Tibial artery (tissue), 4 donors: ENCODE measurements at regions of chrX and their contacts with region 1.

Region 1: GRCh38 chrX:9708904-9709553 is 56.6 kb downstream of the GPR143 start:
- DNase-seq: peak; percentile 45 to 80
- H3K4me3 ChIP-seq: no peak overlapping the region
- H3K27ac ChIP-seq: no peak overlapping the region
- H3K4me1 ChIP-seq: peaks cover 0 to 12% (median 0%) of the 10 kb centered on the region in 4 donors
- H3K27me3 ChIP-seq: no peaks in the 10 kb centered on the region
- CTCF ChIP-seq: peak; percentile 73 to 75

Region 2: DNA sequence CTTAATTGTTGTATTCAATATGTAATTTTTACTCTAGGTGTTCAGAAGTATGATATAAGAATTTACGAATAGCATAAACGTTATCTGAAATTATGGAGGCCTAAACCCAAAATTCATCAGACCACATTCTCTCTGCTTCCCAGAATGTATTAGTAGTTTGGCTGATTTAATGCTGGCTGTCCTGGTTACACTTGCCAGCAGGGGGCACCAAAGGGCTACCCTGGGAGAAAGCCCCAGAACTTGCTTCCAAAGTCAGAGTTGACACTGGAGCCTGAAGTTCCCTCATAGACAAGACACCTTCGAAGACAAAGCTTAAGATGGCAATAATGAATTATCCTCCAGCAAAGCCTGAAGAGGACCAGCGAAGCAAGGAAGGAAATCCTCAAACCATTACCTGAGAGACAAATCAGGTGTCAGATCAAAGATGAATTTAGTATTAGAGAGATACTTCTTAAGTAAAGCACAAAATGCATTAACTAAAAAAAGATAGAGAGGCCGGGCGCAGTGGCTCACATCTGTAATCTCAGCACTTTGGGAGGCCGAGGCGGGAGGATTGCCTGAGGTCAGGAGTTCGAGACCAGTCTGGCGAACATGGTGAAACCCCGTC is 965.8 kb before region 1 on chrX:
- intact Hi-C with region 1: loop called (anchors 10 kb)
- DNase-seq: peak in 1 of 2 donors; percentile 42
- H3K4me3 ChIP-seq: no peak overlapping the region
- H3K27ac ChIP-seq: no peak overlapping the region
- H3K4me1 ChIP-seq: no peaks in the 10 kb centered on the region
- H3K27me3 ChIP-seq: no peaks in the 10 kb centered on the region
- CTCF ChIP-seq: peak in 1 of 2 experiments; percentile 42

Region 3: DNA sequence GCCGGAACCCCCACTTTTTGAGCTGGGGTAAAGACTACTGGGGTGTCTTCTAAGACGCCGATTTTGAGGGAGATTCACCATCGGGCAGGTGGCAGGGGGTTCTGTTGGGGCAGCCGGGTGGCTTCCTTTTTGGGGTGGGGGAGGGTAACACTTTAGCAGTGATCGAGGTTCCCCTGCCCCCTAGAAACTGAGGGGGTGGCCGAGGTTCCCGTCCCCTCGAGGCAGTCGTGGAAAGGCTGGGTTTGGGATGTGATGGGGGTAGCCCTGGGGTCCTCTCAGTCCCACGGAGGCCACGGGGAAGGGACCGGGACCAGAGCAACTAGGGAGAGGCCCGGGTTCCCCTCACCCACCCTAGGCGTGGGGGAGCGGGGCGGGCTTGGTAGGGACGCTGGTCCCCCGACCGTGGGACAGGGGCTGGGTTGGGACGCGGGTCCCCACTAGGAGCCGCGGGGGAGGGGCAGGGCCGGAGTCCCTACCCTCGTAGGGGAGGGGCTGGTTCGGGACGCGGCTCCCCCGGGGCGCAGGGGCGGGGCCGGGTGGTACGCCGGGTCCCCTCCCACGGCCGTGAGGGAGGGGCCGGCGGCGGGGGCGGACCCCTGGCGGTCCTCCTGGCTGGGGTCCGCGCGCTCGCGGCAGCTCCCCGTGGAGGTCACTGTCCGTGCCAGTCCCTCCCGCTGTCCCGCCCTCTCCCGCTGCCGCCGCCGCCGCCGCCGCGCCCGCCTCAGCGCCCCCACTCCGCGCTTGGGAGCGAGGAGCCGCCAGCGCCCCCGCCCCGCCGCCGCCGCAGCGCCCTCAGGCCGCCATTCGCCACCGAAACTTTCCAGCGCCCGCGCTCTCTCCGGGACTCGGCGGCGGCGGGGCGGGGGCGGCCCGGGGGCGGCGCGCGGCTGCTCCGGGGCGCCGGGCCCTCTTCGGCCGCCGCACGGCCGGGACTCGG is 244.3 kb before region 1 on chrX and contains the start of gene TBL1X:
- intact Hi-C with region 1: loop called (anchors 10 kb)
- DNase-seq: peak; percentile 22 to 71
- H3K4me3 ChIP-seq: peak within 1 kb of the TSS; percentile 77 to 83
- H3K27ac ChIP-seq: peak within 1 kb of the TSS; percentile 90 to 93
- H3K4me1 ChIP-seq: peaks cover 0 to 40% (median 16%) of the 10 kb centered on the region in 4 donors
- H3K27me3 ChIP-seq: no peaks in the 10 kb centered on the region
- CTCF ChIP-seq: no peak

Region 4: GRCh38 chrX:9745417-9746115 is 36.5 kb after region 1 on chrX:
- intact Hi-C with region 1: no loop called
- DNase-seq: no peak
- H3K4me3 ChIP-seq: no peak overlapping the region
- H3K27ac ChIP-seq: no peak overlapping the region
- H3K4me1 ChIP-seq: no peaks in the 10 kb centered on the region
- H3K27me3 ChIP-seq: no peaks in the 10 kb centered on the region
- CTCF ChIP-seq: no peak

Region 5: GRCh38 chrX:9770319-9770718 is 61.3 kb after region 1 on chrX:
- intact Hi-C with region 1: no loop called
- DNase-seq: no peak
- H3K4me3 ChIP-seq: no peak overlapping the region
- H3K27ac ChIP-seq: no peak overlapping the region
- H3K4me1 ChIP-seq: no peaks in the 10 kb centered on the region
- H3K27me3 ChIP-seq: peaks cover 0 to 5% of the 10 kb centered on the region in 2 donors
- CTCF ChIP-seq: no peak